Psoas muscle (tissue), 8 donors: ENCODE measurements at regions of chrX and their contacts with region 1.

Region 1: GRCh38 chrX:111244235-111244750 is 26.0 kb downstream of the CAPN6 start:
- DNase-seq: no peak
- ATAC-seq: no peak
- H3K4me3 ChIP-seq: no peak overlapping the region
- H3K27ac ChIP-seq: no peak overlapping the region
- H3K4me1 ChIP-seq: no peaks in the 10 kb centered on the region
- H3K27me3 ChIP-seq: peaks cover 0 to 14% (median 0%) of the 10 kb centered on the region in 3 donors
- CTCF ChIP-seq: peak; percentile 44

Region 2: DNA sequence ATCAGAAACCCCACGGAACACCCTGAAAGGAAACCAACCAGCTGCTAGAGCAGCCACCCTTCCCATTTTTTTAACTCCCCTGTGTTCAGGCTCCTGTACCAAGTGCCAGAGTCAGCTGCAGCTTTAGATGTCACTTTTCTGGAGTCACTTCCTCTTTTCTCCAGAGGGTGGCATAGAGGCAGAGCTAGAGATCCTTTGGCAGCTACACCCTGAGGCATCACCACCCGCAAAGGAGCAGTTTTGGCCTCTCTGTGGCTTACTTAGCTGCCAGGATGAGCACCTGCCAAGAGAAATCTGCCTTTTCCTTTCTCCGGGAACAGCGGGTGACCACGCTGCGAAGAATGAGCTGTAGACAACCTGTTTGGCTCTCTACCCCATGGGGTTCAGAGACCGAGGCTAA is 390.7 kb before region 1 on chrX:
- intact Hi-C with region 1: loop called in 1 of 2 experiments (anchors 10 kb)
- DNase-seq: peak in 1 of 2 donors; percentile 35
- ATAC-seq: peak in 1 of 4 donors; percentile 46
- H3K4me3 ChIP-seq: no peak overlapping the region
- H3K27ac ChIP-seq: no peak overlapping the region
- H3K4me1 ChIP-seq: no peaks in the 10 kb centered on the region
- H3K27me3 ChIP-seq: peaks cover 0 to 15% (median 0%) of the 10 kb centered on the region in 3 donors
- CTCF ChIP-seq: no peak